PC-3 (cell line): ENCODE measurements at regions of chr4 and their contacts with region 1.

Region 1: DNA sequence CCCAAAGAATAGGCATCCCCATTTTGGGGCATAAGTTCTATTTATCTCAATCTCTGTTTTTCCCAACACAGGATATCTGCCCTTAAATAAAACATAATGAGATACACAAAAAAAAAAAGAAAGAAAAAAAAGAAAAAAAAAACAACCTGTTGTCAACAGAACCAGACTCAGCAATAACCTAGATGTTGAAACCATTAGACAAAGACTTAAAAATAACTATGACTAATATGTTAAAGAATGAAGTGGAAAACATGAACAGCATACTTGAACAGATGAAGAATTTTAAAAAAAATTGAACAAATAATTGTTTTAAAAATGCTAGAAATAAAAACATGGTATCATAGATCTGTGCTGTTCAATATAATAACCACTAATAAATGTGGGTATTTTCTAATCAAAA is 93.4 kb upstream of the RXFP1 start:
- DNase-seq: peak; percentile 4
- ATAC-seq: no peak
- H3K4me3 ChIP-seq: no peak overlapping the region
- H3K27ac ChIP-seq: no peak overlapping the region
- H3K4me1 ChIP-seq: no peaks in the 10 kb centered on the region
- H3K27me3 ChIP-seq: no peaks in the 10 kb centered on the region
- CTCF ChIP-seq: no peak

Region 2: DNA sequence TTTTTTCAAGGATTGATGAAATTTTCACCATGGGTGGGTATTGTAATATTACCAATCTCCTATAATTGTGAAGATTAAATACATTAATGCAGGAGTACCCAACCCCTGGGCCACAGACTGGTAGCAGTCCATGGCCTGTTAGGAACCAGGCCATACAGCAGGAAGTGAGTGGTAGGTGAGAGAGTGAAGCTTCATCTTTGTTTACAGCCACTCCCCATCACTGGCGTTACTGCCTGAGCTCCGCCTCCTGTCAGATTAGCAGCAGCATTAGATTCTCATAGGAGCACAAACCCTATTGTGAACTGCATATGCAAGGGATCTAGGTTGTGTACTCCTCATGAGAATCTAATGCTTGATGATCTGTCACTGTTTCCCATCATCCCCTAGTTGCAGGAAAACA is 689.7 kb after region 1 on chr4:
- CTCF ChIA-PET with region 1: no interaction called
- POLR2A ChIA-PET with region 1: interaction called, 10 read pairs
- intact Hi-C with region 1: no loop called
- DNase-seq: no peak
- ATAC-seq: peak; percentile 38; the same call in 1 of the 2 replicates
- H3K4me3 ChIP-seq: no peak overlapping the region
- H3K27ac ChIP-seq: no peak overlapping the region
- H3K4me1 ChIP-seq: peaks cover 11% of the 10 kb centered on the region
- H3K27me3 ChIP-seq: no peaks in the 10 kb centered on the region
- CTCF ChIP-seq: no peak